Activated B cell treated with CpG ODN at 0.5 μM for 24 hours (primary cell): ENCODE measurements at regions of chr10 and their contacts with region 1.

Region 1: DNA sequence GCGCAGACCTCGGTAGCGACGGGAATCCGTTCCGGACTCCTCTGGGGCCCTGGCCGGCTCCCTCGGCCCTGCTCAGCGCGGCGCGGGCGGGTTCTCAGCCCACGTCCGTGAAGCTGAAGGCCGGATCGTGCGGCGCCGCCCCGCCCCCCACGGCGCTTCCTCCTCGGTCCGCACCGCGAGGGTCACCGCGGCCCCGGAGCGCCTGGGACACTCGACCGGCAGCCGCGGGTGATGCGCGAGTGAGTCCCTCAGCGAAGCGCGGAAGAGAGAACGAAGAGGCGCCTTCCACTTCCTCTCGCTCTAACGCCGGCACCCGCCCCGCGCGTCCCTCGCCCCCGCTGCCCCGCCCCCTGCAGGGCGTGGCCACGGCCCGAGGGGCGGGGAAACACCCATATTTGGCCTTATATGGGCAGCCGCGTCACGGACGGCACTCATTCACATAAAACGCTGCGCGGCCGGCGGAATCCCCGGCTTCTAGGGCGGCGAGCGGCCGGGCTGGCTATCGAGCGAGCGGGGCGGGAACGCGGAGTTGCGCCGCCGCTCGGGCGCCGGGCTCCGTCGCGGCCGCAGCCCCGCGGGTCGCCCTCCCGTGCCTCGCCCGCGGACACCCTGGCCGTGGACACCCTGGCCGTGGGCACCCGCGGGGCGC is at the start of gene DUSP5:
- DNase-seq: peak; percentile 99
- ATAC-seq: peak; percentile 87
- H3K4me3 Mint-ChIP-seq: peak within 1 kb of the TSS; percentile 90
- H3K27ac Mint-ChIP-seq: peak within 1 kb of the TSS; percentile 77
- H3K4me1 Mint-ChIP-seq: peaks cover 66% of the 10 kb centered on the region
- H3K27me3 Mint-ChIP-seq: peaks cover 3% of the 10 kb centered on the region
- CTCF ChIP-seq: no peak
- total RNA-seq, gene DUSP5: 26.1 and 28.6 TPM in 2 replicates

Region 2: DNA sequence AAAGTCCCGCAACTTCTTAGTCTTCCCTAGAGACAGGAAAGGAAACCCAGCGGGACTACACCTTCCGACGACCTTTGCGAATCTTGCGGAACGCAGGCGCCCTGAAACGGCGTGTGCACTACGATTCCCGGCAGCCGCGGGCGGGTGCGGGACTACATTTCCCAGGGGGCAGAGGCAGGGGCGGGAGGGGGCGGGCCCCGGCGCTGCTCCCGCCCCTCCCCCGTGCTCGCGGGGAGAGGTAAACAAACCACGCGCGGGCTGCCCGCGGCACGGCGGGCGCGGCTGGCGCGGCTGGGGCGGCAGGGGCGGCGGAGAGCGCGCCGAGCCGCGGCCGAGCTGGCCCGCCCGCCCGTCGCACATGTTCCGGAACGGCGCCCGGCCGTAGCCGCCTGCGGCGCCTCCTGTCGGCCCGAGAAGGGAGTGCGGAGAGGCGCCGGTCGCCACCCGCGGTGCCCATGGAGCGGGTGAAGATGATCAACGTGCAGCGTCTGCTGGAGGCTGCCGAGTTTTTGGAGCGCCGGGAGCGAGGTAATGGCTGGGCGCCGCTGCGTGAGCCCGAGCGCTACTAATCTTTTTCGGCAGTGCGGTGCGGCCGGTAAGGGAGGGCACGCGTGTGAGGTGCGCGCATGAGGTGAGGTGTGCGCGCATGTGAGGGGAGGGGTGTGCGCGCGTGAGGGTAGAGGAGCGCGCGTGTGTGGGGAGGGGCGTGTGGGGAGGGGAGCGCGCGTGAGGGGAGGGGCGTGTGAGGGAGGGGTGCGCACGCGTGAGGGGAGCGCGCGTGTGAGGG is 271.6 kb before region 1 on chr10:
- CTCF ChIA-PET with region 1: no interaction called
- POLR2A ChIA-PET with region 1: no interaction called
- intact Hi-C with region 1: loop called (anchors 1 kb)
- DNase-seq: peak; percentile 83
- ATAC-seq: peak; percentile 51
- H3K4me3 Mint-ChIP-seq: peak overlapping the region; percentile 97
- H3K27ac Mint-ChIP-seq: peak overlapping the region; percentile 96
- H3K4me1 Mint-ChIP-seq: peaks cover 28% of the 10 kb centered on the region
- H3K27me3 Mint-ChIP-seq: no peaks in the 10 kb centered on the region
- CTCF ChIP-seq: no peak

Region 3: GRCh38 chr10:110460111-110460809 is 37.3 kb before region 1 on chr10:
- CTCF ChIA-PET with region 1: no interaction called
- POLR2A ChIA-PET with region 1: interaction called, 6 read pairs
- intact Hi-C with region 1: loop called (anchors 1 kb)
- DNase-seq: peak; percentile 40
- ATAC-seq: peak; percentile 68
- H3K4me3 Mint-ChIP-seq: peak overlapping the region; percentile 38
- H3K27ac Mint-ChIP-seq: peak overlapping the region; percentile 71
- H3K4me1 Mint-ChIP-seq: peaks cover 75% of the 10 kb centered on the region
- H3K27me3 Mint-ChIP-seq: no peaks in the 10 kb centered on the region
- CTCF ChIP-seq: no peak

Region 4: GRCh38 chr10:110535958-110536891 is 38.7 kb after region 1 on chr10:
- CTCF ChIA-PET with region 1: interaction called, 3 read pairs
- POLR2A ChIA-PET with region 1: interaction called, 16 read pairs
- intact Hi-C with region 1: loop called (anchors 1 kb)
- DNase-seq: peak; percentile 49
- ATAC-seq: peak; percentile 83
- H3K4me3 Mint-ChIP-seq: peak overlapping the region; percentile 62
- H3K27ac Mint-ChIP-seq: peak overlapping the region; percentile 68
- H3K4me1 Mint-ChIP-seq: peaks cover 31% of the 10 kb centered on the region
- H3K27me3 Mint-ChIP-seq: peaks cover 4% of the 10 kb centered on the region
- CTCF ChIP-seq: no peak

Region 5: GRCh38 chr10:110864662-110865140 is 367.1 kb after region 1 on chr10:
- CTCF ChIA-PET with region 1: no interaction called
- POLR2A ChIA-PET with region 1: no interaction called
- intact Hi-C with region 1: loop called (anchors 1 kb)
- DNase-seq: no peak
- ATAC-seq: peak; percentile 50
- H3K4me3 Mint-ChIP-seq: peak overlapping the region; percentile 79
- H3K27ac Mint-ChIP-seq: peak overlapping the region; percentile 97
- H3K4me1 Mint-ChIP-seq: peaks cover 98% of the 10 kb centered on the region
- H3K27me3 Mint-ChIP-seq: no peaks in the 10 kb centered on the region
- CTCF ChIP-seq: no peak